Body of pancreas (tissue), 4 donors: ENCODE measurements at regions of chr10 and their contacts with region 1.

Region 1: DNA sequence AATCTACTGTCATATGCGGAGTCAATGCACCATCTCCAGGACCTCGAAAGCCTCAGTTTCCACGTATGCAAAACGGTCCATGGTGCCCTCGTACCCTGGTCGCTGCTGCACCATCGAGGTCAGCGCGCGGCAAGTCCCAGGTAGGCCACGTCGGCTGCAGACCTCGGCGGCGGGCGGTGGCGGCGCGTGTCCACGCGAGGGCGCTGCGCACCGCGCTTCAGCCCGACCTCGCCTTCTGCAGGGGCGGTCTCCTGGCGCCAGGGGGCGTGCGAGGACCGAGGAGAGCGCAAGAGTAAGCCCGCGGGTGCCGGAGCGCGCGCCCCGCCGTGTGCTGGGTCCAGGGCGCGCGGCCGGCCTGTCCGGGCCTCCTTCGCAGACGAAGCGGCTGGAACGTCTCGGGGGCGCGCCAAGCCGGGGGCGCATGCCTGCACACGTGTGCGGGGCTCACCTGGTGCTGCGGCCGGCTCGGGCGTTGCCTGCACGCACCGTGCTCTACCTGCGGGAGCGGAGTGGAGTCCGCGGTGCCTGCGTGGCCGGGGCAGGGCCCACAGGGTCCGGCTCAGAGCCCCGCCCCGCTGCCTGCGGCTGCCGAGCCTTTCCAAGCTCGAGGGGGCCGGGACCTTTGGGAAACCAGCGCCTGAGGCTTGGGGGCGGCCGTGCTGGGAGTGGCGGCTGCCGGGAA is 54.0 kb downstream of the GLRX3 start:
- DNase-seq: peak; percentile 87 to 93 (median 91)
- ATAC-seq: peak; percentile 93
- H3K4me3 ChIP-seq: peak overlapping the region; percentile 27 to 35
- H3K27ac ChIP-seq: peak overlapping the region in 2 of 4 donors; percentile 5 to 8
- H3K4me1 ChIP-seq: peaks cover 8% of the 10 kb centered on the region
- H3K27me3 ChIP-seq: no peaks in the 10 kb centered on the region
- CTCF ChIP-seq: peak; percentile 95 to 100 (median 100)
- POLR2A ChIP-seq: peak in 2 of 3 donors; percentile 17 to 18

Region 2: DNA sequence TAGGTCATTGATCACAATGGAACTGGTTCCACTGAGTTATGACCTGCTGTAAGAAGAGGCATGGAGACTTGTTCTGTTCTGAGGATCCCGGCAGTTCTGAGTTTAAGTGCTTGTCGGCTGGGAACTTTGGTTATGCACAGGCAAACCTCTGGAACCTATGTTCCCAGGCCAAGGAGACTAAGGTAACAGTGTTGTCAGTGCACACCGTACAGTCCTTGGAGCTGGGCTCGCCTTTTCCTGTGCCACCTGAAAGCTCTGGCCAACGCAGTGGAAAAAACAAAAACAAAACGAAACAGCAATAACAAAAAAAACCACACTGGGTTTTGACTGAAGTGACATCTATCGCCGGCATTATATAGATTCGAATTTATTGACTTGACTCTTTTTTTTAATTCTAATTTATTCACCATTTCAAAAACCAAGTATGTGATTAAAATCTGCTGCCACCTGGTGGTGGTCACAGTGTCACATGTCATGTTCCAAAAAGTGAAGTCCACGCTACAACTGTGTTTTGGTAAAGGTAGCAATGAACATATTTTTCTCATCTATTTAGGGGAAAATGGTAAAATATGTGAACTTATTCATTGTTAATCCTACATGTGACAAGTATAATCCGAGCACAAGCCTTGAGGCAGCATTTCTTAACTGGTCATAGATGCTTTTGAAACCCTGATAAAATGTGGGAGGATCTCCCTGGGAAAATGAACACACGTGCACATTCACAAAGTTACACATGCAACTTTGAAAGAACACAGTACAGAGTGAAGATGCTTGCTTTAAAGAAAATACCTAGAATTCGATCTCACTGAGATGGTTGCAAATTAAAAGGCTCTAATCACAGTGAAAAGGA is 1596.8 kb after region 1 on chr10:
- intact Hi-C with region 1: loop called (anchors 5 kb)
- DNase-seq: peak; percentile 31 to 61 (median 48)
- ATAC-seq: no peak
- H3K4me3 ChIP-seq: no peak overlapping the region
- H3K27ac ChIP-seq: no peak overlapping the region
- H3K4me1 ChIP-seq: no peaks in the 10 kb centered on the region
- H3K27me3 ChIP-seq: no peaks in the 10 kb centered on the region
- CTCF ChIP-seq: peak; percentile 33 to 80 (median 70)
- POLR2A ChIP-seq: no peak

Region 3: GRCh38 chr10:131860806-131861440 is 1670.7 kb after region 1 on chr10:
- intact Hi-C with region 1: loop called (anchors 10 kb)
- DNase-seq: peak in 1 of 4 donors; percentile 1
- ATAC-seq: no peak
- H3K4me3 ChIP-seq: no peak overlapping the region
- H3K27ac ChIP-seq: no peak overlapping the region
- H3K4me1 ChIP-seq: peaks cover 3% of the 10 kb centered on the region
- H3K27me3 ChIP-seq: no peaks in the 10 kb centered on the region
- CTCF ChIP-seq: no peak
- POLR2A ChIP-seq: no peak